IMR-90 (cell line): ENCODE measurements at regions of chr19 and their contacts with region 1.

Region 1: GRCh38 chr19:7986321-7987083 is 18.9 kb downstream of the ELAVL1 start:
- DNase-seq: peak; percentile 82
- ATAC-seq: peak; percentile 86
- H3K4me3 ChIP-seq: no peak overlapping the region
- H3K27ac ChIP-seq: no peak overlapping the region
- H3K4me1 ChIP-seq: peaks cover 18% of the 10 kb centered on the region
- H3K27me3 ChIP-seq: no peaks in the 10 kb centered on the region
- CTCF ChIP-seq: no peak; the same call in 1 of the 2 replicates
- POLR2A ChIP-seq: no peak
- RAD21 ChIP-seq: no peak

Region 2: GRCh38 chr19:6279931-6280591 is 1706.4 kb before region 1 on chr19 and contains the start of gene MLLT1:
- CTCF ChIA-PET with region 1: no interaction called
- POLR2A ChIA-PET with region 1: interaction called, 20 read pairs
- dilution Hi-C with region 1: no loop called
- in situ Hi-C with region 1: no loop called
- intact Hi-C with region 1: no loop called
- DNase-seq: peak; percentile 96
- ATAC-seq: peak; percentile 98
- H3K4me3 ChIP-seq: peak within 1 kb of the TSS; percentile 76
- H3K27ac ChIP-seq: peak within 1 kb of the TSS; percentile 62
- H3K4me1 ChIP-seq: peaks cover 25% of the 10 kb centered on the region
- H3K27me3 ChIP-seq: no peaks in the 10 kb centered on the region
- CTCF ChIP-seq: peak; percentile 73
- POLR2A ChIP-seq: no peak
- RAD21 ChIP-seq: peak; percentile 57
- total RNA-seq, gene MLLT1: 1.3 and 1.7 TPM in 2 replicates